Ovary (tissue), 10 donors: ENCODE measurements at regions of chr7 and their contacts with region 1.

Region 1: DNA sequence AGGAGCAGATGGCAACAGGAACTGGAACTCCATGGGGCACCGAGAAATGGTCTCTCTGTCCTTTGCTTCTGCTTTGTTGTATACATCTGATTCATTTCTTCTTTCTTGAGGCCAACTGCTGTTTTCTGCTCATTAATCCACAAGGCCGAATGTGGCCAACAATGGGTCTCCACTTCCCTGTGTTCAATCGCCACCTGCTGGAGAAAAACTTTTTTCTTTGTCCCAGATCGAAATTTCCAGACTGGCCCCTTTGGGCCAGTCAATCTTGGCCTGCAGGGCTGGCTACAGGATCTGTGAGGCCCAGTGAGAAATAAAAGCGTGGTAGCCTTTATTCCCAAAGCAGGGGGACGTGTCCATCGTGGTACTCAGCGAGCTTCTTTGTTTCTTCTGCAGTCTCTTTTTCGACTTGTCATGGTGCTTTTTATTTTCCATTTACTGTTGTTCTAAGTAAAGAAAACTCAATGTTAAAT is 58.8 kb downstream of the PARP12 start:
- DNase-seq: no peak
- H3K4me3 ChIP-seq: no peak overlapping the region
- H3K27ac ChIP-seq: no peak overlapping the region
- H3K4me1 ChIP-seq: no peaks in the 10 kb centered on the region
- H3K27me3 ChIP-seq: no peaks in the 10 kb centered on the region
- CTCF ChIP-seq: no peak
- EP300 ChIP-seq: no peak
- POLR2A ChIP-seq: no peak

Region 2: GRCh38 chr7:139494835-139495579 is 508.9 kb before region 1 on chr7:
- intact Hi-C with region 1: loop called (anchors 5 kb)
- DNase-seq: no peak
- H3K4me3 ChIP-seq: no peak overlapping the region
- H3K27ac ChIP-seq: no peak overlapping the region
- H3K4me1 ChIP-seq: no peaks in the 10 kb centered on the region
- H3K27me3 ChIP-seq: no peaks in the 10 kb centered on the region
- CTCF ChIP-seq: no peak
- EP300 ChIP-seq: no peak
- POLR2A ChIP-seq: no peak

Region 3: GRCh38 chr7:139502226-139502625 is 501.7 kb before region 1 on chr7:
- intact Hi-C with region 1: loop called (anchors 5 kb)
- DNase-seq: no peak
- H3K4me3 ChIP-seq: no peak overlapping the region
- H3K27ac ChIP-seq: no peak overlapping the region
- H3K4me1 ChIP-seq: no peaks in the 10 kb centered on the region
- H3K27me3 ChIP-seq: no peaks in the 10 kb centered on the region
- CTCF ChIP-seq: no peak
- EP300 ChIP-seq: no peak
- POLR2A ChIP-seq: no peak

Region 4: DNA sequence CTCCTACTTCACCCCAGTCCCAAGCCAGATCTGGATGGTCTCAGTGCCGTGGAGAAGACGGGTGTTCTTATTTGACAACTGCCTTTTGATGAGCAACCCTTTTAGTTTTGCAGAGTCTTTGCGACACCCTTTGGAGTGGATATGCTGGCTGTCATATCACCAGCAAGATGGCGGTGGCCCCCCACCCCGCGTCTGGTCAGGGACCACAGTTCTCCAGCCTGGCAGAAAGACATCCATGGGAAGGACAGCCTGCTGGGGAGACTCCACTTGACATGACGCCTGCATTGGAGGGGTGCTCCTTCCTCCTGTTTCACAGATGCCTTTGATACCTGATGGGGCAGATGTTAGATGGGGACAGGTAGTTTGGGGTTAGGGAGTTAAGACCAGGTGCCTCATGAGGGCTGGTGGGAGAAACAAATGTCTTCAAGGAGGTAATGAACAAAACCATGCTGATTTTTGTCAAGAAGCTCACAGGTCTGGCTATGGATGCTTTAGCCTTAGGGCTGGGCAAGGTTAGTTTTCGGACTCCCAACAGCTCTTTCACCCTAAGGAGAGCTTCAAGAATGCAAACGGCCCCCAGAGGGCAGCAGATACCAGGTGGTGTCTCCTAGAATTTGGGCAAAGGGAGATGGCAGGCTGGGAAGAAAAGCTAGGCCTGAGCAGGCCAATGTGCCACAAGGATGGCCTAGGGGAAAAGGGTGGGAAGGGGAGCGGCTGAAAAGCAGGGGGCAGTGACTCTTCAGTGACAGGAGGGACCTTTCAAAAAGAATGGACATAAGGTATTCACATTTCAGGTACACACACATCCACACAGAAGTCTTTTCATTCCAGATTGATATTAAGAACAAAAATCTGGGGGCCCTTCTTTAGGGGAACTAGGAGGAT is 385.2 kb before region 1 on chr7:
- intact Hi-C with region 1: loop called in 1 of 4 experiments (anchors 10 kb)
- DNase-seq: peak in 4 of 5 donors; percentile 32 to 66 (median 44)
- H3K4me3 ChIP-seq: no peak overlapping the region
- H3K27ac ChIP-seq: no peak overlapping the region
- H3K4me1 ChIP-seq: no peaks in the 10 kb centered on the region
- H3K27me3 ChIP-seq: no peaks in the 10 kb centered on the region
- CTCF ChIP-seq: no peak
- EP300 ChIP-seq: no peak
- POLR2A ChIP-seq: no peak

Region 5: DNA sequence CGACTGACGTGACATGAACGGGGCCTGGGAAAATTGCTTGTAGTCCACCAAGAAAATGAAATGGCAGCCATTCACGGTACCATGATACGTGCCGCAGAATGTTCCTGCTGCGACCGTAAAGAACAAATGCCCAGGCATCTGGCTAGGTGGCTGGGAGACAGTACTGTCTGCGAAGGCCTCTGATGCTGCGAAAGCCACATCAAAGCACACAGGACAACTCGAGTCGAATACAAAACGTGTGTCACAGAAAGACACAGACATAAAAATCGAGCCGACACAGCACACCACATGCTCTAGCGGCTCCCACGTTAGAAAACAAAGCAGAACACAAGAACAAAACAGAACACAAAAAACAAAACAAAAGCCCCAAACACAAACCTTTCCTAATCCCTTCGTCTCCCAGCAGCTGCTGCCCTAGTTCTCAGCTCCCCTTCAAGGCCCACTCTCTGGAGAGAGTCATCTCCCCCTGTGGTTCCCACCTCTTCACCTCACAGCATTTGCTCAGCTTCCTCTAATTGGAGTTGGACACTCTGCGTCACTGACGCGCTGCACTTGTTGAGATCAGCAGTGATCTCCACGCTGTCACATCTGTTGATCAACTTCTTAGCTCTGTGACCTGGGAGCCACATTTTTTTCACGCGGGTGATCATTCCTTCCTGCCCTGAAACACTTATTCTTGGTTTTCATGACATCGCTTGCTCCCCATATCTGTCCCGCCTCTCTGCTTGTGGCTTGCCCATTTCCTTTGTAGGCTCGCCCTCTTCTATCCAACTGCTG is 368.2 kb before region 1 on chr7:
- intact Hi-C with region 1: loop called in 1 of 4 experiments (anchors 5 kb)
- DNase-seq: no peak
- H3K4me3 ChIP-seq: no peak overlapping the region
- H3K27ac ChIP-seq: no peak overlapping the region
- H3K4me1 ChIP-seq: no peaks in the 10 kb centered on the region
- H3K27me3 ChIP-seq: no peaks in the 10 kb centered on the region
- CTCF ChIP-seq: no peak
- EP300 ChIP-seq: no peak
- POLR2A ChIP-seq: no peak

Region 6: GRCh38 chr7:139645572-139646523 is 358.1 kb before region 1 on chr7:
- intact Hi-C with region 1: loop called in 3 of 4 experiments (anchors 5 kb)
- DNase-seq: peak; percentile 73 to 83 (median 79)
- H3K4me3 ChIP-seq: no peak overlapping the region
- H3K27ac ChIP-seq: no peak overlapping the region
- H3K4me1 ChIP-seq: peaks cover 1% of the 10 kb centered on the region
- H3K27me3 ChIP-seq: no peaks in the 10 kb centered on the region
- CTCF ChIP-seq: peak; percentile 64 to 83 (median 70)
- EP300 ChIP-seq: no peak
- POLR2A ChIP-seq: no peak

Region 7: GRCh38 chr7:139783647-139784385 is 220.1 kb before region 1 on chr7:
- intact Hi-C with region 1: loop called in 1 of 4 experiments (anchors 5 kb)
- DNase-seq: no peak
- H3K4me3 ChIP-seq: no peak overlapping the region
- H3K27ac ChIP-seq: no peak overlapping the region
- H3K4me1 ChIP-seq: peaks cover 2% of the 10 kb centered on the region
- H3K27me3 ChIP-seq: no peaks in the 10 kb centered on the region
- CTCF ChIP-seq: no peak
- EP300 ChIP-seq: no peak
- POLR2A ChIP-seq: no peak